ENCODE measurements at regions of chr1 and their contacts with region 1.

Region 1: DNA sequence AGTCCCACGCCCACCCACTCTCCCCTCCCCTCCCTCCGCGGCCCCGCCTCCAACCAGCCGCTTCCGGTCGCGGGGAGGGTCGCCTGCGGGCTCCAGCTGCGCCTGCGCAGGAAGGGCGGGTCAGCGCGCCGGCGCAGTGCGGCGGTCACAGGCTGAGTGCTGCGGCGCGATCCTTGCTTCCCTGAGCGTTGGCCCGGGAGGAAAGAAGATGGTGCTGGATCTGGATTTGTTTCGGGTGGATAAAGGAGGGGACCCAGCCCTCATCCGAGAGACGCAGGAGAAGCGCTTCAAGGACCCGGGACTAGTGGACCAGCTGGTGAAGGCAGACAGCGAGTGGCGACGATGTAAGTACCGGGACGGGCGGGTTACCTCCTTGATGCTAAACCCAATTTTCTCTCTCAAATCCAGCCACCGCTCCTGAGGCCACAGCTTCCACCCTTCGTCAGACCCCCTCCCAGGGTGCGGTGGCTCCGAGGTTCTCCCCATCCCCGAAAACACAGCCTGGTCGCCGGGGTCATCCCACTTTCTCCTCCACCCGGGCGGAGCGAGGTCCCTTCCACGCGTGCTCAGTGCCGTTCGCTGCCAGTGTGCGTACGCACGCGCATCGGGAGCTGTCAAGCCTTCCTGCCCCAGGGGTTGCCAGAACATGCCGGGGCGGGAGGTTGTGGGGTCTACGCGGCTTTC is at the start of gene SARS1:
- DNase-seq: peak; percentile 93
- ATAC-seq: peak; percentile 85
- H3K4me3 Mint-ChIP-seq: peak within 1 kb of the TSS; percentile 97
- H3K27ac Mint-ChIP-seq: peak within 1 kb of the TSS; percentile 95
- H3K4me1 Mint-ChIP-seq: peaks cover 32% of the 10 kb centered on the region
- H3K27me3 Mint-ChIP-seq: peaks cover 1% of the 10 kb centered on the region
- total RNA-seq, gene SARS1: 224 to 240 TPM

Region 2: GRCh38 chr1:109041621-109042468 is 172.1 kb before region 1 on chr1 and contains the start of gene WDR47:
- CTCF ChIA-PET with region 1: no interaction called
- POLR2A ChIA-PET with region 1: no interaction called
- intact Hi-C with region 1: loop called (anchors 1 to 5 kb)
- DNase-seq: peak; percentile 98
- ATAC-seq: peak; percentile 99
- H3K4me3 Mint-ChIP-seq: peak within 1 kb of the TSS; percentile 82
- H3K27ac Mint-ChIP-seq: peak within 1 kb of the TSS; percentile 65
- H3K4me1 Mint-ChIP-seq: peaks cover 16% of the 10 kb centered on the region
- H3K27me3 Mint-ChIP-seq: no peaks in the 10 kb centered on the region
- total RNA-seq, gene WDR47: 6.9 to 7.6 TPM

Region 3: DNA sequence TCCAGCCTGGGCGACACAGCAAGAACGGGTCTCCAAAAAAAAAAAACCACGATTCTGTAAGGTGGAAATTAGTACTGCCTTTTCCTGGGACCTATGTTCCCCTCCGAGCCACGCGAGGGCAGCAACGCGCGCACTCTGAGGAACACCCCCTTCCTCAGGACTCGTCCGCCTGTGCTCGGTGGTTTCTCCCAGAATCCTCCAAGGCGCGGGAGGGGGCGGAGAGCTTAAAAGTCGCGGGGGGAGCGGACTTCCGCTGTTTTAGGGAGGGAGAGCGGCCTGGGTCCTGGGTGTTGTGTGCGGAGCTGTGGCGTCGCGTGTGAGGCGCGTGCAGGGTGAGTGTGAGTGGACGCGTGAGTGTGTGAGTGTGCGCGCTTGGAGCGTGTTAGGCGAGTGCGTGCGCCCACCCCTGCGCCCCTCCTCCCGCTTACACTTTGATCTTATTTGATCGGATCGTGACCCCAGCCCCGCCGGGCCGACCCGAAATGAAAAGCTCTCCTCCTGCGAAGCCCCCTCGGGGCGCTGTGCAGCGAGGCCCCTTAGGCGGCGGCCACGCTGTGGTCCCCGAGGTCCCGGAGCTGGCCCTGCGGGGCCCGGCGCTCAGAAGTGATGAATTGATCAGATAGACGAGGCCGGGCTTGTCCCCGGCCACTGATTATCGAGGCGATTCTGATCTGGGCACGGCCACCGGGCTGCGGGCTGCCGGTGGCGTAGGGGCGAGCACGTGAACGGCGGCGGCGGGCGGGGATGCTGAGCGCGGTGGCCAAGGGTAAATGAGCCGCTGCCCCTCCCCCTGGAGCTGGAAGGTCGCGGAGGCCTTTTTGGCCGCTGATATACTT is 113.8 kb before region 1 on chr1:
- CTCF ChIA-PET with region 1: interaction called, 4 read pairs
- POLR2A ChIA-PET with region 1: interaction called, 3 read pairs
- intact Hi-C with region 1: loop called in 1 of 2 experiments (anchors 1 kb)
- DNase-seq: peak; percentile 98
- ATAC-seq: peak; percentile 94
- H3K4me3 Mint-ChIP-seq: peak overlapping the region; percentile 98
- H3K27ac Mint-ChIP-seq: peak overlapping the region; percentile 98
- H3K4me1 Mint-ChIP-seq: peaks cover 6% of the 10 kb centered on the region
- H3K27me3 Mint-ChIP-seq: no peaks in the 10 kb centered on the region

Region 4: DNA sequence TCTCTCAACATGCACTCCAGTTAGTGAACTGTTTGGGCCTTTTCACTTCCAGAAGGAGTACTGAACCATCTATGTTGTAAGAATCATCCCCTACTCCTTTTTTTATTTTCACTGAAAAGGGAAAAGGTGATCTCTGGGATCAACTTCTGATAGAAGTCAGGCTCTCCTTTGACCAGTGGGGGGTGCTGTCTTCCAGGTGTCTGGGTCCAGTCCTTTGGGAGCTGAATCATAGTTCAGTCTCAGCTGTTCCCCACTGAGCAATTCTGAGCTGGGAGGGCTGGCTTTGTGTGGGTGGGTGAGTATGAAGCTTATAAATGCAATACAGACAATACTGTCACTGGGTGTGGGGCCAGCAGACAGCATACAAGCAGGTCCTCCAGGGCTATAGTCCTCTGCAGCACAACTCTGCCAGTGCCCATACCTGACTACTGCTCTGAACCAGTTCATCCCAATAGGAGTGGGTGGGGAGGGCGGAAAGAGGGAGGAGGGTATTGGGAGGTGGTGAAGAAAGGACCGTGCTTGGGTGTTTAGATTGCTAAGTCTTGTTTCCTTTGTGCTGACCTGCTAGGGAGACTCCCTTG is 12.7 kb before region 1 on chr1:
- CTCF ChIA-PET with region 1: interaction called, 45 read pairs
- POLR2A ChIA-PET with region 1: interaction called, 12 read pairs
- intact Hi-C with region 1: loop called (anchors 1 kb)
- DNase-seq: peak; percentile 91
- ATAC-seq: peak; percentile 92
- H3K4me3 Mint-ChIP-seq: no peak overlapping the region
- H3K27ac Mint-ChIP-seq: no peak overlapping the region
- H3K4me1 Mint-ChIP-seq: peaks cover 26% of the 10 kb centered on the region
- H3K27me3 Mint-ChIP-seq: no peaks in the 10 kb centered on the region

Region 5: GRCh38 chr1:109282952-109283747 is 69.2 kb after region 1 on chr1 and contains the start of gene PSRC1:
- CTCF ChIA-PET with region 1: interaction called, 7 read pairs
- POLR2A ChIA-PET with region 1: interaction called, 4 read pairs
- intact Hi-C with region 1: loop called in 1 of 2 experiments (anchors 1 kb)
- DNase-seq: peak; percentile 95
- ATAC-seq: peak; percentile 98
- H3K4me3 Mint-ChIP-seq: peak within 1 kb of the TSS; percentile 86
- H3K27ac Mint-ChIP-seq: peak within 1 kb of the TSS; percentile 90
- H3K4me1 Mint-ChIP-seq: peaks cover 11% of the 10 kb centered on the region
- H3K27me3 Mint-ChIP-seq: no peaks in the 10 kb centered on the region
- total RNA-seq, gene PSRC1: 17.6 to 18.4 TPM

Region 6: GRCh38 chr1:109350655-109351054 is 136.7 kb after region 1 on chr1:
- CTCF ChIA-PET with region 1: no interaction called
- POLR2A ChIA-PET with region 1: no interaction called
- intact Hi-C with region 1: no loop called
- DNase-seq: no peak
- ATAC-seq: no peak
- H3K4me3 Mint-ChIP-seq: no peak overlapping the region
- H3K27ac Mint-ChIP-seq: no peak overlapping the region
- H3K4me1 Mint-ChIP-seq: no peaks in the 10 kb centered on the region
- H3K27me3 Mint-ChIP-seq: peaks cover 2% of the 10 kb centered on the region

Region 7: GRCh38 chr1:109493805-109494539 is 280.0 kb after region 1 on chr1 and contains the start of gene CYB561D1:
- CTCF ChIA-PET with region 1: interaction called, 3 read pairs
- POLR2A ChIA-PET with region 1: no interaction called
- intact Hi-C with region 1: loop called in 1 of 2 experiments (anchors 2 kb)
- DNase-seq: peak; percentile 95
- ATAC-seq: peak; percentile 89
- H3K4me3 Mint-ChIP-seq: peak within 1 kb of the TSS; percentile 98
- H3K27ac Mint-ChIP-seq: peak within 1 kb of the TSS; percentile 90
- H3K4me1 Mint-ChIP-seq: peaks cover 45% of the 10 kb centered on the region
- H3K27me3 Mint-ChIP-seq: no peaks in the 10 kb centered on the region
- total RNA-seq, gene CYB561D1: 7.1 to 8.7 TPM

Region 8: GRCh38 chr1:109620841-109621286 is 406.9 kb after region 1 on chr1:
- CTCF ChIA-PET with region 1: no interaction called
- POLR2A ChIA-PET with region 1: no interaction called
- intact Hi-C with region 1: loop called in 1 of 2 experiments (anchors 2 kb)
- DNase-seq: peak; percentile 99
- ATAC-seq: peak; percentile 86
- H3K4me3 Mint-ChIP-seq: peak overlapping the region; percentile 97
- H3K27ac Mint-ChIP-seq: peak overlapping the region; percentile 97
- H3K4me1 Mint-ChIP-seq: peaks cover 60% of the 10 kb centered on the region
- H3K27me3 Mint-ChIP-seq: no peaks in the 10 kb centered on the region

Region 9: GRCh38 chr1:109667452-109668122 is 453.7 kb after region 1 on chr1 and contains the start of gene GSTM2:
- CTCF ChIA-PET with region 1: no interaction called
- POLR2A ChIA-PET with region 1: no interaction called
- intact Hi-C with region 1: no loop called
- DNase-seq: peak; percentile 92
- ATAC-seq: peak; percentile 100
- H3K4me3 Mint-ChIP-seq: peak within 1 kb of the TSS; percentile 71
- H3K27ac Mint-ChIP-seq: no peak within 1 kb of the TSS
- H3K4me1 Mint-ChIP-seq: peaks cover 18% of the 10 kb centered on the region
- H3K27me3 Mint-ChIP-seq: no peaks in the 10 kb centered on the region
- total RNA-seq, gene GSTM2: 18.7 to 23.9 TPM

Measured in activated CD4-positive, alpha-beta T cell treated with anti-CD3 and anti-CD28 coated beads for 36 hours (primary cell).